HCT116 (cell line): ENCODE measurements at regions of chr1 and their contacts with region 1.

Region 1: DNA sequence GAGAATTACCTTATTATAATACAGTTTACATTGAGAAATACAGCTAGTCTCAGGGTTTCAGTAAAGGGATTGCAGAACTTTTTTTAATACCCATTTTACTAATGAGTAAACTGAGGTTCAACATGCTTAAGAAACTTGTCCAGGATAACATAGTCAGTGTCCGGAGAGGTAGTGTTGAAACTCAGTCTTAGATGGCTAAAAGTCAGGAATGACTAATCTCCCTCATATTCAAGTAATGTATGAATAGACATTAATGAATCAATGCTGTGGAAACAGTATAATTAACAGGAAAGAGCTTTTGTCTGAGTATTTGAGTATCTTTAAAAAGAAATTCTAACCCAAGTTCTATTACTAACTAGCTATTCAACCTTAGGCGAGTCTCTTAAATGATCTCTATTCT is 397.6 kb downstream of the PLA2G4A start:
- DNase-seq: no peak
- ATAC-seq: no peak
- H3K4me3 ChIP-seq: no peak overlapping the region
- H3K27ac ChIP-seq: no peak overlapping the region
- H3K4me1 ChIP-seq: no peaks in the 10 kb centered on the region
- H3K27me3 ChIP-seq: no peaks in the 10 kb centered on the region
- CTCF ChIP-seq: no peak
- POLR2A ChIP-seq: no peak
- RAD21 ChIP-seq: no peak

Region 2: DNA sequence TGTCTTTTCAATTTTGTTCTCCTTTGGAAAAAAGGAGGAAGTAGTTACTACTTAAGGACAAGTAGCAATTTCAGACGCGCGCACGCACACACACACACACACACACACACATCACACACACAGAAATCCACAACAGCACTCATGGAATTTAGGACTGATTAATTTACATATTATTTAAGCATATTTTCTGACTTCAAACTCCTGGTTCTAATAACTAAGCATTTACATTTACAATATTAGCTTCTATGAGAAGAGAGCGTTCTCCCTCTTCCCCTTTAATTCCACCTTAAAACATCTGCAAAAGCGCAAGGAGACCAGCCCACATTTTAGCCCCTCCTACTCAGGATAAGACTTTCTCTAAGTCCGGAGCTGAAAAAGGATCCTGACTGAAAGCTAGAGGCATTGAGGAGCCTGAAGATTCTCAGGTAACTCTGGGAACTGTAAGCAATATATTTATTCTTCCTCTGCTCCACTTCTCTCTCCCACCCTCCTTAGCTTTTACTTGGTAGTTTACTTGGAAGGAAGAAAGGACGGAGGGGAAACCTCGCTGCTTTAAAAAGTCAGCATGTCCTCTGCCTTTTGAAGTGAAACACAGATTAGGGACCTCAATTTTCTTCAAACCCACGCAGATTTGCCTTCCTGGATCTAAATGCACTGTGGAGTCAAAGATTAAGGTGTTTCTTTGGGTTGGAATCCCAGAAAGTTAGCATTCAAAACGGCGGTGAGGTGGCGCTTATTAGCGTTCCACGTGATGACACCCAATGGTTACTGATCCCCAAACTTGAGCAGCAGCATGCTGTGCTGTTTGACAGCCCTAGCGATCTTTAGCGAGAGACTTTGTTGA is 397.6 kb before region 1 on chr1 and contains the start of gene PLA2G4A:
- CTCF ChIA-PET with region 1: no interaction called
- POLR2A ChIA-PET with region 1: no interaction called
- RAD21 ChIA-PET with region 1: no interaction called
- intact Hi-C with region 1: no loop called
- DNase-seq: peak; percentile 64
- ATAC-seq: peak; percentile 96
- H3K4me3 ChIP-seq: peak within 1 kb of the TSS; percentile 69 to 72
- H3K27ac ChIP-seq: peak within 1 kb of the TSS; percentile 45
- H3K4me1 ChIP-seq: peaks cover 2 to 7% of the 10 kb centered on the region in 2 experiments; a peak in 3 of 4 replicates
- H3K27me3 ChIP-seq: no peaks in the 10 kb centered on the region
- CTCF ChIP-seq: no peak
- POLR2A ChIP-seq: peak; percentile 58
- RAD21 ChIP-seq: peak; percentile 4; the same call in 1 of the 2 replicates
- total RNA-seq, gene PLA2G4A: 8.6 TPM

Region 3: GRCh38 chr1:187185396-187185795 is 41.0 kb before region 1 on chr1:
- CTCF ChIA-PET with region 1: no interaction called
- POLR2A ChIA-PET with region 1: no interaction called
- RAD21 ChIA-PET with region 1: no interaction called
- intact Hi-C with region 1: loop called (anchors 1 kb)
- DNase-seq: no peak
- ATAC-seq: no peak
- H3K4me3 ChIP-seq: no peak overlapping the region
- H3K27ac ChIP-seq: no peak overlapping the region
- H3K4me1 ChIP-seq: no peaks in the 10 kb centered on the region
- H3K27me3 ChIP-seq: no peaks in the 10 kb centered on the region
- CTCF ChIP-seq: no peak
- POLR2A ChIP-seq: no peak
- RAD21 ChIP-seq: no peak

Region 4: DNA sequence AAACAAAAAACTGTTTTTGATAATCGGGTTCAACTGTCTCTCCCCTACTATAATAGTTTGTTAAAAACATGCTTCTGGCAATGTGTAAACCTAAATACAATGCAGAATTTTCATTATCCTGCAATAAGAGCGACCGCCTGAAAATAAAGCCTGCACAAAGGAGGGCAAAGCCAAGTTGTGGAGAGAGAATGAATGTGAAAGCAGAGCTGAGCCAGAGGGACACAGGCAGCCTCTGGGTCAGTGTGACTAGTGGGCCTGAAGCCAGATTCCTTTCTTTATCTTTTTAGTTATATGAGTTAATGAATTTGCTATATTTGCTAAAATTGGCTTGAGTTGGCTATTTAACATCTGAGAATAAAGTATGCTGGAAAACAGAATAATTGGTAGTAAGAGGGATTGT is 217.5 kb after region 1 on chr1:
- CTCF ChIA-PET with region 1: no interaction called
- POLR2A ChIA-PET with region 1: no interaction called
- RAD21 ChIA-PET with region 1: no interaction called
- intact Hi-C with region 1: no loop called
- DNase-seq: no peak
- ATAC-seq: no peak
- H3K4me3 ChIP-seq: no peak overlapping the region
- H3K27ac ChIP-seq: no peak overlapping the region
- H3K4me1 ChIP-seq: no peaks in the 10 kb centered on the region
- H3K27me3 ChIP-seq: no peaks in the 10 kb centered on the region
- CTCF ChIP-seq: no peak
- POLR2A ChIP-seq: no peak
- RAD21 ChIP-seq: no peak